Psoas muscle (tissue), 8 donors: ENCODE measurements at regions of chr4 and their contacts with region 1.

Region 1: DNA sequence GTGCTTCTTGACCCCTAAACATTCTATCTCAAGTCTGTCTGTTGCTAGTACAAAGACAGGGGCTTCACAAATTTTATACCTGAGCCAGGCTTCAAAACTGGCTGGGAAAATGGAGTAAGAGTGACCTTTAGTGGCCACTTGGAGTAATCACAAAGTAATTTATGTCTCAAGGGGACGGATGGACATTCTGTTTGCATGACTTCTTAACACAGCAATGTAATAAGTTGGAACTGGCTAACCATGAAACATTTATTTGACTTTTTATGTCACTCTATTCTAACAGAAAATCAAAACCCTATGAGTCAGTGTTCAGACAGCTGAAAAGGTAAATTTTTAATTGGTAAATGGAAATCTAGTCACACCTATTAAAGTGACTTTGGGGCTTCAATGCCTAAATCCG is 600.6 kb downstream of the ANKRD50 start:
- DNase-seq: no peak
- ATAC-seq: peak; percentile 76 to 94 (median 90)
- H3K4me3 ChIP-seq: no peak overlapping the region
- H3K27ac ChIP-seq: no peak overlapping the region
- H3K4me1 ChIP-seq: peaks cover 7% of the 10 kb centered on the region
- H3K27me3 ChIP-seq: no peaks in the 10 kb centered on the region
- CTCF ChIP-seq: peak; percentile 72

Region 2: GRCh38 chr4:123102897-123103471 is 1008.9 kb before region 1 on chr4:
- intact Hi-C with region 1: loop called (anchors 5 to 10 kb)
- DNase-seq: no peak
- ATAC-seq: peak; percentile 58 to 88 (median 68)
- H3K4me3 ChIP-seq: no peak overlapping the region
- H3K27ac ChIP-seq: no peak overlapping the region
- H3K4me1 ChIP-seq: no peaks in the 10 kb centered on the region
- H3K27me3 ChIP-seq: no peaks in the 10 kb centered on the region
- CTCF ChIP-seq: peak; percentile 82

Region 3: GRCh38 chr4:123564758-123565346 is 547.1 kb before region 1 on chr4:
- intact Hi-C with region 1: loop called in 1 of 2 experiments (anchors 10 kb)
- DNase-seq: no peak
- ATAC-seq: peak; percentile 89 to 98 (median 94)
- H3K4me3 ChIP-seq: no peak overlapping the region
- H3K27ac ChIP-seq: no peak overlapping the region
- H3K4me1 ChIP-seq: no peaks in the 10 kb centered on the region
- H3K27me3 ChIP-seq: no peaks in the 10 kb centered on the region
- CTCF ChIP-seq: peak; percentile 80

Region 4: GRCh38 chr4:123776254-123776653 is 335.7 kb before region 1 on chr4:
- intact Hi-C with region 1: loop called (anchors 10 kb)
- DNase-seq: no peak
- ATAC-seq: no peak
- H3K4me3 ChIP-seq: no peak overlapping the region
- H3K27ac ChIP-seq: no peak overlapping the region
- H3K4me1 ChIP-seq: peaks cover 5% of the 10 kb centered on the region
- H3K27me3 ChIP-seq: no peaks in the 10 kb centered on the region
- CTCF ChIP-seq: no peak

Region 5: DNA sequence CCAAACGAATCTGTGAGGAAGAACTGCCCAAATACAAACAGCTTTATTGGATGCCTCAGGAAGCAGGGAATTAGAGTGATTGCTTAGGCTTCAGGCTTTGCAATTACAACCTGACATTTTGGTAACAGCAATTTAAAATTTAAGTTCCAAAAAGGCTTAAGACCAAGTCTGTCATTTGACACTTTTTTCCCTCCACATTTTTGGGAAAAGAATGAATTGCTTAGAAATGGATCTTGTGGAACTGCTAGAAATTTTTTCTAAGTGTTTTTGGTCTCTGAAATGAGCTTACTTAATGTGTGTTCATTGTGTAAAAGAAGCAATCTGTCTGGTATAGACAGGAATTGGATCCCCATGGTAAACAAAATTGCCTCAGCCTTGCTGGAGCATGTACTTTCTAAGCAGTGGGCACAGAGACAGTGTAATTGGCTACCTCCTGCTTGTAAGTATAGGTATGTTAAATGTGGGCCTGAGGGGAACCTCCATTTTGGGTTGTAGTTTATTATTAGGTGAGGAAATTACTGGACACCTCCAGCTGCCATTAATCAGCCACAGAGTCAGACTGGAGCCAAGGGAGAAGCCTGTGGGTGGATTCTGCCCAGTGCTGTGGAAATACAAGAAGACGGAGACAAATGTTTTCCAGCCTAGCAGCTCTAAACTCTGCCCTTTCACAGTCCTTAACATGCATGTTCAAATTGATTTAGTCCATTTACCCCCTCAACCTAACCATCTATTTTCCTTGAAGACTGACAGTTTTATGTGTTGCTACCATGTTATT is 242.4 kb before region 1 on chr4:
- intact Hi-C with region 1: no loop called
- DNase-seq: no peak
- ATAC-seq: peak; percentile 57 to 79 (median 74)
- H3K4me3 ChIP-seq: peak overlapping the region; percentile 3
- H3K27ac ChIP-seq: peak overlapping the region; percentile 78
- H3K4me1 ChIP-seq: peaks cover 28% of the 10 kb centered on the region
- H3K27me3 ChIP-seq: no peaks in the 10 kb centered on the region
- CTCF ChIP-seq: no peak